Lower leg skin (tissue), 4 donors: ENCODE measurements at regions of chr5 and their contacts with region 1.

Region 1: DNA sequence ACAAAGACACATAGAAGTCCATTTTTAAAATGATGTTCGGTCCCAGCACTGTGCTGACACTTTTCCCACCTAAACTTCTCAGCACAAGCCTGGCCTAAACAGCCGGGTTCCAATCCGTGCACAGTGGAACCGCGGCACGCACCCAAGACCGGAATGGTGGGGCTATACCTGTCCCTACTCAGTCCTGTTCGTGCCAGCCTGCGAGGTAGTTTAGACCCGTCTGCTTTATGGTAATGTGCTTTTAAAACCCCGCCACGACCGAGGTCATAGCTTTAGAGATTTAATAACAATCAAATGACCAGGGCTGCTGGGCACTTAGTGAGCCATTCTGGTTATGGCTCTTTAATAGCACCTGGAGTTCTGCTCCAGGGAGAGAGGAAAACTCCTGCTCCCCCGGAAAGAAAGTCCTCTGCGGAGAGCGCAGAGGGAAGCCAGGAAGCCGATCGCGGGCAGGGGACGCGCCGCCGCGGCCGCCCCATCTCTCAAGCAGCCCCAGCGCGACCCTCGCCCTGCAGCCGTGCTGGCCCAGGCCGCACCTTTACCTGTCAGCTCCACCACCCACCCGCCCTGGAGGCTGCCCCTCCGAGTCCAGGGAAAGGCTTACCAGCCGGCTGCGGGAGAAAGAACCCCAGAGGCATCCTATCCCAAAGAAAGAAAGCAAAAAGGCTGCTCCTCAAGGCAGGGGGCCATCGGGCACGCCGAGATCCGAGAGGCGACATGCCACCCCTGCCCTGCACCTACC is 511 bp downstream of the ARL15 start:
- DNase-seq: peak in 1 of 2 donors; percentile 90
- H3K4me3 ChIP-seq: peak overlapping the region; percentile 97
- CTCF ChIP-seq: no peak
- POLR2A ChIP-seq: no peak

Region 2: DNA sequence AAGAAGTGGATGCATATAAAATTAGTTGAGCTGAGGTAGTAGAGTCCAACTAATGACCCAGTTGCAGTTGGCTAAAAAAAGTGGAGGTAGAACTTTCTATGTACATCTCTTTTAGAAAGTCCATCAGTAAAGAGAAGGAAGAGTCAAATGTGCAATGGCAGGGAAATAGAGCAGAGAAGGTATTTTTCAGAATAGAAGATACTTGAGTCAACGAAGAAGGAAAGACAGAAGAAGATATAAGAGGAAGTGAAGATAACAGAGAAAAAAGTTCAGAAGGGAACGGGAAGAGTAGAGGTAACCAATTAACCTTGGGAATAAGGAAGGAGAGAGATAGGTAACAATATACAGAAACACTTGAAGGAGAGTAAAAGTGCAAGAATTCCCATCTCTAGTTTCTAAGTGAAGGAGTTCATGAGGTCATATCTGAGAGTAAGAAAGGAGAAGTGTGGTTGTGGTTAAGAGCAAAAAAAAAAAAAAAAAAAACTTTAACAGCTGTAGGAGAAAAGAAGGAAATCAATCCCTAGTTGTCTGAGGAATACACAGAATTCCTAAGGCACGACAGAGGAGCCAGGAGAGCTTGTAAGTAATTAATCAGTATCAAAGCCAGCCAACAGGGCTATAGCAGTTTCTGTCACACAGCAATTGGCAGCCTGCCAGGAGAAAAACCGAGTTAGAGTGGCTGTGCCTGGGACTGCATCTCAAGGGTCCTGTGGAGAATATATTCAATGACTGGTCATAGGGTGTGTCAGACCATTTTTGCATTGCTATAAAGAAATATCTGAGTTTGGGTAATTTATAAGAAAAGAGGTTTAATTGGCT is 60.4 kb before region 1 on chr5:
- intact Hi-C with region 1: loop called (anchors 10 kb)
- DNase-seq: peak in 1 of 2 donors; percentile 84
- H3K4me3 ChIP-seq: no peak overlapping the region
- CTCF ChIP-seq: no peak
- POLR2A ChIP-seq: no peak

Region 3: DNA sequence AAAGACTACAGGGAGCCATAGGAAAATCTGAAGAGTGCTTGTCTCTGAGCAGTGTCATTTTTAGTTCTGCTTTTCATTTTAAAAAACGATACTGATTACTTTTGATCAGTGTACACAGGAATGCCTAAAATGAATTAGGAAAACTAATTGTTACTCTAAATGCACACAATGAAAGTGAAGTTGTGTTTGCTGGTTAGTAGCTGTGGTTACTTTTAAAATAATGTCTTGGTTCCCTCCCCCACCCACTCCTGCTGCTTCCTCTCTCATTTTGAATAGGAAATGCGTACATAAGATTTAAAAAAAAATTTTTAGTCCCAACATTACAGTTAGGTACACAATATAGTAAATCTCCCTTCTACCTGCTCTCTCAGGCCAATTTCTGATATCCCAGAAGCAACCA is 1272.4 kb after region 1 on chr5:
- intact Hi-C with region 1: no loop called
- DNase-seq: no peak
- H3K4me3 ChIP-seq: no peak overlapping the region
- CTCF ChIP-seq: no peak
- POLR2A ChIP-seq: no peak